ENCODE measurements at regions of chr1 and their contacts with region 1.

Region 1: DNA sequence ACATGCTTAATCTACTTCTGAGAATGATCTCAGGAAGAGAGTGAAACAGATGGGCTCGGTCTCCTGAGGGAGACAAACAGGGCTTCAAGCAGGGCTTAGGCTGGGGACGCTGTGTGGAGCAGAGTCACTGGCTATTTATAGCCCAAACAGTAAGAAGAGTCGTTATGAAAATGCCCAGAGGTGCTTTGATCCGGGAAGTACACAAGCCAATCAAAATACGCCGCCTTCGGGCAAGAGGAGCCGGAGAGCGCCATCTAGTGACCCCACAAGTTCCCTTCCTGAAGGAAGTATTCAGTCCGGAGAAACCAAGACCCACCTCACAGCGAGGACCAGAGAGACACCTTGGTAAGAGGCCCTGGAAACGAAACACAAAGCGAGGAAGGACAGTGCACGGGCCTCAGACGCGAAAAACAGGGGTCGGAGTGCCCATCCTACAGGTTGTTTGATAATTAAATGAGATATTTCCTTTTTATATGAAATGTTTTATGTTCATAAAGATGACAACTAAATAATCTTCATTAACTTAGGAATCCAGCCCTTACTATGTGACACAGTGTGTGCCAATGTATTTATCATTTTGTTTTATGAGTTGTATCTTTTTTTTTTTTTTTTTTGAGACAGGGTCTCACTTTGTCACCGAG is 25.0 kb upstream of the SCCPDH start:
- DNase-seq: peak; percentile 95
- H3K4me3 ChIP-seq: peak overlapping the region; percentile 35 to 54 (median 40)
- H3K27ac ChIP-seq: peak overlapping the region; percentile 30 to 70 (median 54)
- H3K4me1 ChIP-seq: peaks cover 7 to 19% (median 14%) of the 10 kb centered on the region in 4 donors
- H3K27me3 ChIP-seq: no peaks in the 10 kb centered on the region
- CTCF ChIP-seq: peak; percentile 78 to 87 (median 85)
- EP300 ChIP-seq: no peak
- POLR2A ChIP-seq: no peak

Region 2: GRCh38 chr1:246506674-246507481 is 192.3 kb before region 1 on chr1 and contains the start of gene SMYD3:
- intact Hi-C with region 1: loop called (anchors 2 kb)
- DNase-seq: peak; percentile 90
- H3K4me3 ChIP-seq: peak within 1 kb of the TSS; percentile 71 to 95 (median 86)
- H3K27ac ChIP-seq: peak within 1 kb of the TSS; percentile 51 to 70 (median 68)
- H3K4me1 ChIP-seq: peaks cover 7 to 25% (median 20%) of the 10 kb centered on the region in 4 donors
- H3K27me3 ChIP-seq: no peaks in the 10 kb centered on the region
- CTCF ChIP-seq: peak in 2 of 3 experiments; percentile 22 to 52
- EP300 ChIP-seq: no peak
- POLR2A ChIP-seq: no peak
- total RNA-seq, gene SMYD3: 12.0 to 15.0 (median 13.2) TPM

Region 3: GRCh38 chr1:246647113-246647512 is 52.1 kb before region 1 on chr1:
- intact Hi-C with region 1: loop called (anchors 5 kb)
- DNase-seq: no peak
- H3K4me3 ChIP-seq: peak overlapping the region; percentile 19 to 38 (median 34)
- H3K27ac ChIP-seq: peak overlapping the region; percentile 62 to 76 (median 72)
- H3K4me1 ChIP-seq: peaks cover 18 to 50% (median 44%) of the 10 kb centered on the region in 4 donors
- H3K27me3 ChIP-seq: no peaks in the 10 kb centered on the region
- CTCF ChIP-seq: peak; percentile 52 to 77 (median 64)
- EP300 ChIP-seq: no peak
- POLR2A ChIP-seq: no peak

Measured in esophagus muscularis mucosa (tissue), 4 donors.